SK-N-SH (cell line): ENCODE measurements at regions of chr11 and their contacts with region 1.

Region 1: DNA sequence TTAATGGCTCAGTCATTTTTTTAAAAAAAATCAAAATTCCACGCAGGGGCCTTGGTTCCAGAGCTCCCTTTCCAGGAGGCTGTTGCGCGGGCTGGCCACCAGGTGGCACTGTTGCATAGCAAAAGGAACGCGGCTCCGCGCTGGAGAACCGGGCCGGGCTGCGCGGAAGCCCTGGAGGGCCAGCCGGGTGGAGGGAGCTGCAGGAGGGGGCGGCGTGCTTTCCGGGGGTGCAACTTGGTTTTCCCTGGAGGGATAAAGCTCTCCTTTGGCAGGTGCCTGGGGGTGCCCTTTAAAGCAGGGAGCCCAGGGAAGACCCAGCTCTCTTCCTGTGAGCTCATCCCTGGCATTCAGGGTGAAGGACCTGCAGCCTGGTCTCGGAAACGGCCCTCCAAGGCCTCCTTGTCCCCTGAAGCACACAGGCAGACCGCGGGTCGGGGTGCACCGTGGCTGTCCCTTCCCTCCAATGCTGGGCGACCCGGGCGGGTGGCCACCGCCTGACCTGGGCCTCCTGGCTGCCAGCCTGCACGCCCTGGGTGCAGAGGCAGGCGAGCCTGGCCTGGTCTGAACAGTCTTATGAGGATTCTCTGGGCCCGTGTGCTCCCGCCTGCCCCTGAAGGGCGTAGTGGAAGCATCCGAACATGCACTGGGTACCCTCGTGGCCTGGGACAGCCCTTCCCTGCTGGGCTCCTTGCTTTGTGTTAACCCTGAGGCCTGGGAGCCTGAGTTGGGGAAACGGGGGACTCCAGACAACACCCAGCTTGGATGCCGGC is 23.4 kb downstream of the KRTAP5-5 start:
- DNase-seq: peak; percentile 96
- H3K4me3 ChIP-seq: peak overlapping the region in 1 of 2 experiments; percentile 25; a peak in 2 of 4 replicates
- H3K27ac ChIP-seq: no peak overlapping the region
- H3K4me1 ChIP-seq: peaks cover 0 to 27% of the 10 kb centered on the region in 2 experiments; a peak in 1 of 4 replicates
- H3K27me3 ChIP-seq: no peaks in the 10 kb centered on the region
- CTCF ChIP-seq: peak; percentile 95
- EP300 ChIP-seq: no peak
- RAD21 ChIP-seq: peak; percentile 93

Region 2: GRCh38 chr11:1628506-1629325 is 24.2 kb before region 1 on chr11:
- CTCF ChIA-PET with region 1: interaction called, 12 read pairs
- POLR2A ChIA-PET with region 1: interaction called, 3 read pairs
- DNase-seq: peak; percentile 96
- H3K4me3 ChIP-seq: peak overlapping the region in 1 of 2 experiments; percentile 35; a peak in 1 of 4 replicates
- H3K27ac ChIP-seq: no peak overlapping the region
- H3K4me1 ChIP-seq: peaks cover 0 to 11% of the 10 kb centered on the region in 2 experiments; a peak in 1 of 4 replicates
- H3K27me3 ChIP-seq: peaks cover 19% of the 10 kb centered on the region; the same call in 1 of the 2 replicates
- CTCF ChIP-seq: peak; percentile 85
- EP300 ChIP-seq: no peak
- RAD21 ChIP-seq: peak; percentile 69

Region 3: DNA sequence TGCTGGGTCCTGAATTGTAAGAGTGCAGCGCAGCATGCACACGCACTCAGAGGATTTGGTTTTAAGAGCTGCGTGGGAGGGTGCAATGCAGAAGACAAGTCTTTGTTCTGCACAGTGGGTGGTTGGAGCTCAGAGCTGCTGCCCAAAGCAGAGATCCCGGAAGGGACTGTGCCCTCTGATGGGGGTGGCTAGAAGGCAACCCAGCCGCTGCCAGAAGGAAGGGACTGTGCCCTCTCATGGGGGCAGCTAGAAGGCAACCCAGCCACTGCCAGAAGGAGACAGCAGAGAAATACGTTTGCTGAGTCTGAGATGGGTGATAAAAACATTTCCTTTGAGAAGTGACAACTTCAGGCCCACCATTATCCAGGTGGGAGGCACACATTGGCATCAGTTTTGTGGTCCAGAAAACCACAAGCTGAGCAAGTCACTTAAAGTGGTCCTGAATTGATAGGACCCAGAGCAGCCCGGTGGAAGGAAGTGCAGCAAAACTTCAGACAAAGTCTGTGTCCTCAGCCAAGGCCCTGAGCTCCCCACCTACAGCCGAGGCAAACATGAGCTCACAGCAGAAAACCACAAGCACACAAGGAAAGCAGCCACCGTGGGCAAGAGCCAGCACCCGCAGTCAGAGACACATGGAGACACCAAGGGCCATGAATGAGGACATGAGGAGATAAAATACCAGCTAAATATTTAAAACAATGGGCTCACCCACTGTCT is 48.3 kb after region 1 on chr11:
- CTCF ChIA-PET with region 1: interaction called, 28 read pairs
- POLR2A ChIA-PET with region 1: interaction called, 3 read pairs
- DNase-seq: no peak
- H3K4me3 ChIP-seq: no peak overlapping the region
- H3K27ac ChIP-seq: no peak overlapping the region
- H3K4me1 ChIP-seq: no peaks in the 10 kb centered on the region
- H3K27me3 ChIP-seq: no peaks in the 10 kb centered on the region; the same call in 1 of the 2 replicates
- CTCF ChIP-seq: no peak
- EP300 ChIP-seq: no peak
- RAD21 ChIP-seq: no peak

Region 4: DNA sequence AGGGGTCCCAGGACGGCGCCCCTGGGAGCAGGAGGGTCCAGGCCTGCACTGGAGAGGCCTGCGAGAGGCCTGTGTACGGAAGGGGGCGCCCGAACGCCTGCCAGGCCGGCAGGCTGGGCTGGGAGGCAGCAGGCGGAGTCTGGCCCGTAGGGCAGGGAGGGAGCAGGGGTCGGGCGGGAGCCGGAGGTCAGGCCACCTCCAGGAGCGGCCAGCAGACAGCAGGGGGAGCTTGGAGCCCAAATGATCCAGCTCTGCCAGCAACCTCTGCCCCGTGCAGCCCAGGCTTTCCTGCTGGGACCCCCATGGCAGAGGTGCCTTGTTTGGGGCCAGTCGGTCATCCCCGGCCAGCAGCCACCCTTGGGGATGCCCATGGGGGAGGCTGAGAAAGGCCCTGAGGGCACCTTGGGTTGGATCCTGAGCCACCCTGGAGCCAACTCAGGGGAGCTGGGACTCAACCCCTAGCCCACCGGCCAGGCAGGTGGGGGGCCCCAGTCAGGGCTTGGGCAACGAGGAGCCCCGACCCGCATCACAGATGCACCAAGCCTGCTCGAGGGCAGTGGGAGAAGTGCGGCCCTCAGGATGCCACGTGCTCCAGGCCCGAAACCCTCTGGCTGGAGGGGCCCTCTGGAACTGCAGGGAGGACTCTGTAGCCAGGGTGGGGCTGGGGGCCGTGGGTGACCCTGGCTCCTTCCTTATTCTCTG is 172.2 kb after region 1 on chr11:
- CTCF ChIA-PET with region 1: interaction called, 251 read pairs
- POLR2A ChIA-PET with region 1: no interaction called
- DNase-seq: no peak
- H3K4me3 ChIP-seq: peak overlapping the region in 1 of 2 experiments; percentile 43; a peak in 1 of 4 replicates
- H3K27ac ChIP-seq: no peak overlapping the region
- H3K4me1 ChIP-seq: peaks cover 13 to 41% of the 10 kb centered on the region in 2 experiments; a peak in 3 of 4 replicates
- H3K27me3 ChIP-seq: no peaks in the 10 kb centered on the region
- CTCF ChIP-seq: no peak
- EP300 ChIP-seq: no peak
- RAD21 ChIP-seq: no peak

Region 5: GRCh38 chr11:1852877-1853276 is 199.9 kb after region 1 on chr11 and contains the start of gene LSP1:
- CTCF ChIA-PET with region 1: interaction called, 25 read pairs
- POLR2A ChIA-PET with region 1: no interaction called
- DNase-seq: no peak
- H3K4me3 ChIP-seq: no peak within 1 kb of the TSS
- H3K27ac ChIP-seq: no peak within 1 kb of the TSS
- H3K4me1 ChIP-seq: no peaks in the 10 kb centered on the region; a peak in 1 of 4 replicates
- H3K27me3 ChIP-seq: no peaks in the 10 kb centered on the region
- CTCF ChIP-seq: no peak
- EP300 ChIP-seq: no peak
- RAD21 ChIP-seq: no peak
- polyA plus RNA-seq, gene LSP1: 0.34 and 0.38 TPM in 2 replicates

Region 6: GRCh38 chr11:1946812-1947484 is 294.0 kb after region 1 on chr11 and contains the start of gene MRPL23:
- CTCF ChIA-PET with region 1: interaction called, 16 read pairs
- POLR2A ChIA-PET with region 1: no interaction called
- DNase-seq: no peak
- H3K4me3 ChIP-seq: no peak within 1 kb of the TSS
- H3K27ac ChIP-seq: no peak within 1 kb of the TSS
- H3K4me1 ChIP-seq: peaks cover 0 to 15% of the 10 kb centered on the region in 2 experiments; a peak in 1 of 4 replicates
- H3K27me3 ChIP-seq: no peaks in the 10 kb centered on the region
- CTCF ChIP-seq: no peak
- EP300 ChIP-seq: no peak
- RAD21 ChIP-seq: no peak
- polyA plus RNA-seq, gene MRPL23: 226 and 264 TPM in 2 replicates

Region 7: DNA sequence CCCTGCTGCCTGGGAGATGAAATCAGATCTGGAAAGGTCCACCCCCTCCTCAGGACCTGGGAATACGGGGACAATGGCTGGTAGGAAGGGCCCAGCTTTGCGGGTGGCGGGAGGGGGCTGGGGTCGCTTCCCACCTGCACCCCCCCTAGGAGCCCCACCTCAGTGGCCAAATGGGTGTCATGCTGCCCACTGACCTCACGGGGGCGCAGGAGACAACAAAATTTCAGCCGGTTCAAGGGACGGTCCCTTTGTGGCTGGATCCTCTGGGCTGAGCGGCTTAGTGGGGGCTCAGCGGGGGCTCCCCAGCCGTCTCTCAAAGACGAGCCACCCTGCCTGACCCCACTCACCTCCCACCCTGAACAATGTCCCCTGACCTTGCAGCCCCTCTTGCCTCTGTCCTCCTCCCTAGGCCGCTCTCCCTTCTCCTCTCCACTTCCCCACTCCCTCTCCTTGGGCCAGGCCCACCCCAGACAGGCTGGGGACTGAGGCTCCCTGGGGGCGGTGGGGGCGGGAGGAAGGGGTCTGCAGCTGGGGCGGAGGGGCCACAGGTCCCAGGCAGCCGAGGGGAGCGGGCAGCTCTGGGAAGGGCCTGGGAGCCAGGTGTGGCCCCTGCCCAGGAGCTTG is 384.0 kb after region 1 on chr11:
- CTCF ChIA-PET with region 1: interaction called, 19 read pairs
- POLR2A ChIA-PET with region 1: no interaction called
- DNase-seq: no peak
- H3K4me3 ChIP-seq: no peak overlapping the region
- H3K27ac ChIP-seq: no peak overlapping the region
- H3K4me1 ChIP-seq: no peaks in the 10 kb centered on the region
- H3K27me3 ChIP-seq: no peaks in the 10 kb centered on the region
- CTCF ChIP-seq: no peak
- EP300 ChIP-seq: no peak
- RAD21 ChIP-seq: no peak